H1 (cell line): ENCODE measurements at regions of chr2 and their contacts with region 1.

Region 1: GRCh38 chr2:231482806-231483391 is 18.6 kb upstream of the NCL start:
- DNase-seq: peak in 1 of 2 experiments; percentile 89
- H3K4me3 ChIP-seq: no peak overlapping the region
- H3K27ac ChIP-seq: no peak overlapping the region
- H3K4me1 ChIP-seq: peaks cover 0 to 2% (median 0%) of the 10 kb centered on the region in 4 experiments; a peak in 1 of 7 replicates
- H3K27me3 ChIP-seq: no peaks in the 10 kb centered on the region
- CTCF ChIP-seq: peak; percentile 75 to 85 (median 79)
- EP300 ChIP-seq: no peak
- POLR2A ChIP-seq: no peak
- RAD21 ChIP-seq: peak; percentile 37 to 67; a peak in 3 of 4 replicates

Region 2: DNA sequence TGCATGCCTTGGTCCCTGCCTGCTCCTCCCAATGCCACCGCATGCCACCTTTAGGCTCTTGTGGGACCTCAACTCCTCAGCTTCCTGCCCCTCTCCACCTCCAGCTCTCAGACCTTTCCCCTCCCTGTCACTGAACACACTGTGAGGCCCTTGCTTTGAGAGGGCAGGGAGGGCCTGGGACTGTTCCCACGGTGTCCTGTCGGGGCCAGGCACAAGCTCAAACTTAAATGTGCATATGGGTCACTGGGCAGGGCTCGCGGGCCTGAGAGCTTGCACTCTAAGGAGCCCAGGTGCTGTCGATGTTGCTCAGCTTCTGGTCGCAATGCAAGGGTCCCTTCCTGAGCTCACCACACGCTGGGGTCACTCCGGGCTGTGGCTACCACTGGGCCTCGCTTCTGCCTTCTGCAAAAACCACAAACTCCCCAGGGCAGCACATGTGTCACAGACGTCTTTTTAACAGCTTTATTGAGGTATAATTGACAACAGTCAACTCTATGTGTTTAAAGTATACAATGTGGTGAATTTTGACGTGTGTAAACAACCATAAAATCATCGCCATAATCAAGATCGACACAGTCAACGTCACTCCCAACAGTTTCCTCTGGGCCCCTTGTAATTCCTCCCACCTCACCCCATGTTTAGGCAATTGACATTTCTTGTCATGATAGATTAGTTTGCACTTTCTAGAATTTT is 99.3 kb before region 1 on chr2:
- CTCF ChIA-PET with region 1: no interaction called
- POLR2A ChIA-PET with region 1: no interaction called
- DNase-seq: no peak
- H3K4me3 ChIP-seq: no peak overlapping the region
- H3K27ac ChIP-seq: no peak overlapping the region
- H3K4me1 ChIP-seq: peaks cover 0 to 6% (median under 1%) of the 10 kb centered on the region in 4 experiments; a peak in 6 of 7 replicates
- H3K27me3 ChIP-seq: no peaks in the 10 kb centered on the region
- CTCF ChIP-seq: no peak
- EP300 ChIP-seq: no peak
- POLR2A ChIP-seq: no peak
- RAD21 ChIP-seq: no peak

Region 3: GRCh38 chr2:231514103-231514950 is 31.4 kb after region 1 on chr2:
- CTCF ChIA-PET with region 1: interaction called, 13 read pairs
- POLR2A ChIA-PET with region 1: interaction called, 3 read pairs
- DNase-seq: peak; percentile 93 to 98
- H3K4me3 ChIP-seq: peak overlapping the region; percentile 82 to 93 (median 88)
- H3K27ac ChIP-seq: peak overlapping the region; percentile 88
- H3K4me1 ChIP-seq: peaks cover 0 to 8% (median 5%) of the 10 kb centered on the region in 4 experiments; a peak in 4 of 7 replicates
- H3K27me3 ChIP-seq: no peaks in the 10 kb centered on the region
- CTCF ChIP-seq: no peak
- EP300 ChIP-seq: no peak
- POLR2A ChIP-seq: peak; percentile 93 to 97
- RAD21 ChIP-seq: no peak